AG04450 (cell line): ENCODE measurements at regions of chr1 and their contacts with region 1.

Region 1: DNA sequence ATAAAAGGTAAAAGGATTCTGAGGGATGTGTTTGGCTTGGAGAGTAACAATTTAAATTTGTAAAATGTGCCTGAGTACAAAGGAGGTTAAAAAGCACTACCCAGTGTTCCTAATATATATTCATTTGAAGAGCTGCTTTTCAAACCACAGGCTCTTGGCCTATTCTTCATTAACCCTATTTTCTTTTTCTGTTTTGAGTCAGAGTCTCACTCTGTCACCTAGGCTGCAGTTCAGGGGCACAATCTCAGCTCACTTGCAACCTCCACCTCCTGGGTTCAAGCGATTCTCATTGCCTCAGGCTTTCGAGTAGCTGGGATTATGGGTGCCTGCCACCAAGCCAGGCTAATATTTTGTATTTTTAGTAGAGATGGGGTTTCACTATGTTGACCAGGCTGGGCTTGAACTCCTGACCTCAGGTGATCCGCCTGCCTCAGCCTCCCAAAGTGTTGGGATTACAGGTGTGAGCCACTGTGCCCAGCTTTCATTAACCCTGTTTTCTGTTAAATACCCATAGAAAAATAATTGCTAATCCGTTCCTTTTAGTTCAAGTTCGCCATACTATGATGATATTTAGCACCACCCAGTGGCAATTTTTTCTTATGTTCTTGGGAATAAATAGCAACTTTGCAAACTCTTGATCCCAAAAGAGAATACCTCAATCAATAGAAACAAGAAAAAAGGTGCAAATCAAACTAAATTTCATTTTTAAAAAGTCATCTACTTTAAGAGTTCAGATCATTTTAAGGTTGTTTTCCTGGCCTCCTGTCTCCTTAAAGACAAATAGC is 30.5 kb downstream of the ZBTB8OS start:
- DNase-seq: no peak
- H3K4me3 ChIP-seq: no peak overlapping the region
- H3K27ac ChIP-seq: no peak overlapping the region
- H3K27me3 ChIP-seq: no peaks in the 10 kb centered on the region
- CTCF ChIP-seq: peak; percentile 29

Region 2: DNA sequence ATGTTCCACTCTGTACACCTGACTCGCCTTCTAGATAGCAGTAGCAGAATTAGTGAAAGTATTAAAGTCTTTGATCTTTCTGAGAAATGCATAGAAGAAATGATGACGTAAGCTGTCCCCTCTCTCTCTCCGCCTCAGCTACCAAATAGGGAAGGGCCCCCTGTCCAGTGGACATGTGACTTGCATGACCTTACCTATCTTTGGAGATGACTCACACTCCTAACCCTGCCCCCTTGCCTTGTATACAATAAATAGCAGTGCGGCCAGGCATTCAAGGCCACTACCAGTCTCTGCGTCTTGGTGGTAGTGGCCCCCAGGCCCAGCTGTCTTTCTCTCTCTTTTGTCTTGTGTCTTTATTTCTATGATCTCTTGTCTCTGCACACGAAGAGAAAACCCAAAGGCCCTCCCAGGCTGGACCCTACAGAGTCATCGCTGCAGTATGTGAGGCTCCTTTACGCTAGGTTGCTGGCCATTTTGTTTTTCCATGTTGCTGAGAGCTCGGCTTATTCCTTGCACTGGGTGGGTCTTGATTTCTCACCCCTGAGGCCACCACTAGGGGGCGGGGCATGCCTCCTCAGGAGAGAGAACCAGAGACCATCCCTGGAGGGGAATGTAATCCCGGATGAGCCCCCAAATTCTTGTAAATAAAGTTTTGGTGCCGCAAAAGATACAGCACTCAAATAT is 171.0 kb before region 1 on chr1:
- CTCF ChIA-PET with region 1: interaction called, 11 read pairs
- POLR2A ChIA-PET with region 1: no interaction called
- DNase-seq: no peak
- H3K4me3 ChIP-seq: no peak overlapping the region
- H3K27ac ChIP-seq: no peak overlapping the region
- H3K27me3 ChIP-seq: no peaks in the 10 kb centered on the region
- CTCF ChIP-seq: 0 out of 2 replicates have a peak, but pooled peaks have one; percentile 15